ENCODE measurements at regions of chrX and their contacts with region 1.

Region 1: DNA sequence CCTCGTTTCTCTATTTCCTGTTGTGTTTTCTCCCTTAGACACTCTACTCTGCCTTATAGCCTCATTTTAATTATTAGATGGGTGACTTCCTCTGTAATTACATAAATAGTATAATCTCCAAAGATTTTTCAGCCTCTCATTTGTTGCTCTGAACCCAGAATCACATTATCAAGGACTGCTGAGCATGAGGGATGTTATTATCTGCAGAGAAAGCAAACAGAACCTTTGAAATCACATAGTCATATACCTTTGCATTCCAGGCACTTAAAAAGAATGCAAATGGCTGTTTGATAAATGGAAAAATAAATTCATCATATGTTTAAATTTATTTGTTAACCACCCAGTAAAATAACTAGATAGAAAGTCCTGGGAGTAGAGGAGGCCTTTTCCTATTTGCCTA is 305.1 kb upstream of the PPP1R2C start:
- DNase-seq: no peak
- H3K4me3 ChIP-seq: no peak overlapping the region
- H3K27ac ChIP-seq: no peak overlapping the region
- H3K4me1 ChIP-seq: no peaks in the 10 kb centered on the region
- H3K27me3 ChIP-seq: peaks cover 0 to 4% of the 10 kb centered on the region in 2 donors
- CTCF ChIP-seq: no peak
- POLR2A ChIP-seq: no peak

Region 2: GRCh38 chrX:42567268-42567667 is 515.7 kb before region 1 on chrX:
- intact Hi-C with region 1: loop called (anchors 5 kb)
- DNase-seq: no peak
- H3K4me3 ChIP-seq: no peak overlapping the region
- H3K27ac ChIP-seq: no peak overlapping the region
- H3K4me1 ChIP-seq: no peaks in the 10 kb centered on the region
- H3K27me3 ChIP-seq: peaks cover 0 to 11% of the 10 kb centered on the region in 2 donors
- CTCF ChIP-seq: no peak
- POLR2A ChIP-seq: no peak

Measured in breast epithelium (tissue), 4 donors.